Common myeloid progenitor, CD34-positive (primary cell): ENCODE measurements at regions of chr7 and their contacts with region 1.

Region 1: DNA sequence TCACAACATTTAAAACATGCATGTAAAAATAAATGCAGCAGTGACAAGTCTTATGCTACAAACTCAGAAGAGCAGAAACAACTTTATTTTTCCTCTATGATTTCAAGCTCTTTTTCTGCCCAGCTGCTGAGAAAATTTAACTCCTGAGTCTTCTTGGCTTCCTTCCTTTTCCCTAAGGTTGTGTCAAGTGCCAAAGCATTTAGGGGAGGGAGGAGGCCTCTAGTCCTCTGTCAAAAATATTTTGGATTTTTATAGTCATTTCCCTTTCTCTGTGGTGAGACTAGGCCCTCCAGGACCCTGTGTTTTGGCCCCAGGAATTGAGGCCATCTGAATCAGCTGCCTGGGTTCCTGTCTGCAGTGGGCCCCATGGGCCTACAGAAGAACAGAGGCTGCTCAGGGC is 11.0 kb upstream of the PILRB start:
- DNase-seq: no peak
- H3K4me3 ChIP-seq: no peak overlapping the region
- H3K27ac ChIP-seq: peak overlapping the region in 1 of 2 experiments; percentile 18
- H3K4me1 ChIP-seq: peaks cover 0 to 2% (median 1%) of the 10 kb centered on the region in 4 experiments
- H3K27me3 ChIP-seq: no peaks in the 10 kb centered on the region

Region 2: GRCh38 chr7:100369105-100369504 is 22.2 kb after region 1 on chr7:
- CTCF ChIA-PET with region 1: interaction called, 10 read pairs
- POLR2A ChIA-PET with region 1: no interaction called
- DNase-seq: peak; percentile 93 to 98 (median 97)
- H3K4me3 ChIP-seq: peak overlapping the region in 1 of 7 experiments; percentile 21
- H3K27ac ChIP-seq: peak overlapping the region; percentile 70 to 77
- H3K4me1 ChIP-seq: peaks cover 7 to 89% (median 59%) of the 10 kb centered on the region in 4 experiments
- H3K27me3 ChIP-seq: no peaks in the 10 kb centered on the region

Region 3: GRCh38 chr7:100483101-100483721 is 136.3 kb after region 1 on chr7:
- CTCF ChIA-PET with region 1: no interaction called
- POLR2A ChIA-PET with region 1: no interaction called
- DNase-seq: peak; percentile 65 to 79 (median 75)
- H3K4me3 ChIP-seq: peak overlapping the region; percentile 18 to 76 (median 63)
- H3K27ac ChIP-seq: peak overlapping the region in 1 of 2 experiments; percentile 5
- H3K4me1 ChIP-seq: peaks cover 0 to 18% (median 15%) of the 10 kb centered on the region in 4 experiments
- H3K27me3 ChIP-seq: no peaks in the 10 kb centered on the region

Region 4: DNA sequence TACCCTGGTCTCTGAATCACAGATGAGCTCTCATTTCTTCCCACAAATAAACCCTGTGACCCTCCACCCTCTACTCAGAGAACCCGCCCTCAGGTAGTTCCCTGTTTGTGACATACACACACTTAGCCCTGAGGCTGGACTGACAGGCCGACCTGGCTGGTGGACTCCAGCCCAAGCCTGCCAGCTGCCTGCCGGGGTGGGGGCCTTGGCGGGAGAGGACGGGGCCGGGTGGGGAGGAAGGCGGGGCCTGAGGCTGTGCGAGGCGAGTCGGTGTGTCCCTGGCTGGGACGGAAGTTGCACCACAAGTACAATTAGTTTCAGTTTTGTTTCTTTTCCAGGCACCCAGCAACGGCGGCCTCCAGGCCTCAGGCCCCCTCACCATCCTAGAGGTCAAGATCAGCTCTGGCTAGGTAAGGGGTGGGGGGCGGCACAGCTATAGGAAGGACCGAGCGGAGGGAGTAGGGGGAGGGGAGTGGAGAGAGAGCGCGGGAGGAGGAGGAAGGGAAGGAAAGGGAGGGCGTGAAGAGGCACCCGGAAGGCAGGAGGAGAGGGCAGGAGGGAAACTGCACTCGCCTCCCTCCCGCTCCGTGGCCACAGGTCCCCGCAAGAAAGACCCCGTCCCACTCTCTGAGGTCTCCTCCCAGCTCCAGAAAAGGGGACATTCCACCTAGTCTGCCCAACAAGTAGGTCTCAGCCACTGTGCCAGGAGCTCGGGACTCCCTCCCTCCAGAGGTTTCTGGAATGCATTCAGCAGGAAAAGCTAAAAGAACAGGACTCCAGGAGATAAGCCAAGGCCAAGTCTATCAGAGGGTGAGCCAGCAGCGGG is 738.5 kb after region 1 on chr7 and contains the start of gene TRIM56:
- CTCF ChIA-PET with region 1: no interaction called
- POLR2A ChIA-PET with region 1: no interaction called
- DNase-seq: peak; percentile 68 to 89 (median 78)
- H3K4me3 ChIP-seq: peak within 1 kb of the TSS; percentile 49 to 96 (median 91)
- H3K27ac ChIP-seq: peak within 1 kb of the TSS; percentile 93 to 98
- H3K4me1 ChIP-seq: peaks cover 0 to 22% (median 15%) of the 10 kb centered on the region in 4 experiments
- H3K27me3 ChIP-seq: no peaks in the 10 kb centered on the region